Posterior vena cava (tissue), 2 donors: ENCODE measurements at regions of chr1 and their contacts with region 1.

Region 1: GRCh38 chr1:9270290-9270883 is 22.3 kb upstream of the SPSB1 start:
- DNase-seq: no peak

Region 2: GRCh38 chr1:7313081-7313546 is 1957.3 kb before region 1 on chr1:
- intact Hi-C with region 1: loop called in 1 of 2 experiments (anchors 10 kb)
- DNase-seq: no peak

Region 3: DNA sequence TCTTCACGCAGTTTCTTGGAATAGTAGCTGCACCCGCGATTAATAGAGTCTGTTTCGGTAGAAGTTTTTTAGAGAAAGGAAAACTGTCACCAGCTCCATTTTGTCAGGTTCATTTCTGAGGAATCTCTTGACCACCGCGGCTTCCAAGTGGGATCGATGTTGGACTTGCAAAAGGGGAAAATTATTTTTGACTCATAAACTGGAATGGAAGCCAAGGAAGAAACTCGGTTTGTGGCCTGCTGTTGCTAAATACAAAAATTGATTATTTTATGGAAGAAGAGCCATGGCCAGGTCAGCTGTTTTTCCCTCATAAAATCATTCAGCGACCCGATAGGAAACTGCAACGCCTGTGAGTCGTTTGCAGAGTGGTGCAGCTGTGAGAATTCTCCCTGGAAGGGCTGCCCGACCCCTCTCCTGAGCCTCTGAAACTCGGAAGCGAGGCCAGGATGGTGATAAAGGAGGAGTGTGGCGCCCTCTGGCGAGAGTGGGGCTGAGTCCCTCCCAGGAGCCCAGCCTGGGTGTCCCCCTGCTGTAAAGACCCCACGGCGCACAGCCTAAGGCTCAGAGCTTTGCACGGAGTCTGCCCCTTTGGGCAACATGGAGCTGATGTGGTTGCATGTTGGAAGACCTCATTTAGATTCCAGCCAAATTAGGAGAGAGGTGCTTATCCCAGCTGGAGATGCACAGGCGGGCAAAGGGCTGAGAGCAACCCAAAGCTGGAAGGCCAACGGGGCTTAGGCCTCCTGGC is 185.3 kb after region 1 on chr1:
- intact Hi-C with region 1: loop called (anchors 5 kb)
- DNase-seq: peak; percentile 89

Region 4: GRCh38 chr1:9486466-9487140 is 216.2 kb after region 1 on chr1:
- intact Hi-C with region 1: loop called (anchors 5 to 10 kb)
- DNase-seq: no peak

Region 5: DNA sequence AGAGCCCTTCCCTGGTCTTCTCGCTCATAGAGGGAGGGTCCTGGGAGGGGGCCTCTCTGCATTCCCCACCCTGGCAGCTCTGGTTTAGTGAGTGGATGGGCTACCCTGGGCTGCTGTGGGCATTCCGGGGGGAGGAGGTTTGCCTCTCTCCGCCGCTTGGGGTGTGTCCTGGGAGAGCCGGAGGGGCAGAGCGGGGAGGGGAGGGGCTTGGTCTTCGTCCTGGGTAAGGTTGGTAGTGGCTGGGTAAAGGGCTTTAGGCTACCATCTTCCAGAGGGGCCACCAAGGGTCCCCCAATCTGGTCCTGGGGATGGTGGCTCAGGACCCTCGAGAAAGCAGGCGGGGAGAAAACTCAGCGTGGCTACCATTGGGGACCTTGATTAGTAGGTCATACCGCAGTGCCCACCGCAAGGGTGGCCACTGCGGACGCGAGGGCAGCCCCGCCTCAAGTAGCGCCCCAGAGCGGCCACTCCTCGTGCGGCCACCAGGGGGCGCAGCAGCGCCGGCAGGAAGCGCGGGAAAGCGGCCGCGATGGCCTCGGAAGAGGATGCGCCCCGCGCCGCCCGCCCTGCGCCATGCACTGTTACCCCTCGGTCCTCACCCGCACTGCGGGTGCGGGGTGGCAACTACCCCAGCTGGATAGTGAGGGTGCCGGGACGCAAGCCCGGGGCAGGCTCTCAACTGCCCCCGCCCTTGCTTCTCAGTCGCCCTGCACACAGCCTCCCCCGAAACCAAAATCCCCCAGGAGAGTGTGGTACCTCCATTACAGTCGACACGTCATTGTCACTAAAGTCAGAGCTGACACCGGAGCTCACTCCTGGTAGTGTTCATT is 224.8 kb after region 1 on chr1:
- intact Hi-C with region 1: loop called in 1 of 2 experiments (anchors 10 kb)
- DNase-seq: peak; percentile 86

Region 6: DNA sequence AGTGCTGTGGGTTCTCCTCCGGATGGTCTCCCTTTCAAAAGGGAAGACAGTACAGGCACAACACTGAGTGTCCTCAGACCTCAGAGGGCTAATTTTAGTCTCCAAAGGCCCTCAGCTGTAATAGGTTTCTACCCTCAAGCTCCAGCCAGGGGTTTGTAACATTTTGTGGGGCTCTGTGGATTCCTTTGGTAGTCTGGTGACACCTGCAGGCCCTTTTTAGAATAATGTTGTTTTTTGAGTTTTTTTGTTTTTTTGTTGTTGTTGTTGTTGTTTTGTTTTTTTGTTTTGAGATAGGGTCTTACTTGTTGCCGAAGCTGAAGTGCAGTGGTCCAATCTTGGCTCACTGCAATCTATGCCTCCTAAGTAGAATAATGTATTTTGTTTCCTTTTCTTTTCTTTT is 303.3 kb after region 1 on chr1:
- intact Hi-C with region 1: loop called in 1 of 2 experiments (anchors 10 kb)
- DNase-seq: no peak

Region 7: DNA sequence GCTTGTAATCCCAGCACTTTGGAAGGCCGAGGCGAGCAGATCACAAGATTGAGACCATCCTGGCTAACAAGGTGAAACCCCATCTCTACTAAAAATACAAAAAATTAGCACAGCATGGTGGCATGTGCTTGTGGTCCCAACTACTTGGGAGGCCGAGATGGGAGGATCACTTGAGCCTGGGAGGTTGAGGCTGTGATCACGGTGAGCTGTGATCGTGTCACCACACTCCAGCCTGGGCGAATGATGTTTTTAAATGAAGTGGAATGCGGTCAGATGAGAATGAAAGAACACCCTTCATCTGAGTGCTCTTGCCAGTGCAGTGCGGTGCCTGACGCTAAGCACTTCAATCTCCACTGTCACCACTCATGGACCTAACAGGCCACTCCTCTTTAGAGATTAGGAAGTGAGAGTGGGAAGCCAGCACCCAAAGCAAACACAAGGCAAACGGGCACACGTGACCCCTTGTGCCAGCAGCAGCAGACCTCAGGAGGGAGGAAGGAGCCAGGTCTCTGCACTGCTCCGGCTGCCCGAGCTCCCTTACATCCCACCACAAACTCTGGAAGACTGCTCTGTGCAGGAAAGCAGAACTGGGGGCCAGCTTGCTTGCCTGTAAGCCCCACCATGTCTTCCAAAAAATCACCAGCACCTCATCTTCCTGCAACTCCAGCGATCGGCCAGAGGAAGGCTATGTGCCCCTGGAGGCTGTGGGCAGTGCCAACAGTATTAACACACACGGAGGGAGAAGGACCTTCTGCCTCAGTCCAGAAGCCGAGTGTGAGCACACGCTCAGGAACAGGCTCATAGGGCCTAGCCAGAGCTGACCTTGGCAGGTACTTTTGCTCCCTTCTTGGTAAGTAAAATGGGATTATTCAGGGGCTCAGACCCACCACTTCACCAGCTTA is 630.0 kb after region 1 on chr1:
- intact Hi-C with region 1: no loop called
- DNase-seq: peak; percentile 84